ENCODE measurements at regions of chrX and their contacts with region 1.

Region 1: GRCh38 chrX:20442597-20442996 is 175.9 kb upstream of the RPS6KA3 start:
- DNase-seq: peak; percentile 82
- H3K4me3 Mint-ChIP-seq: no peak overlapping the region
- H3K27ac Mint-ChIP-seq: no peak overlapping the region
- H3K4me1 Mint-ChIP-seq: no peaks in the 10 kb centered on the region
- H3K27me3 Mint-ChIP-seq: peaks cover 21% of the 10 kb centered on the region
- CTCF ChIP-seq: peak; percentile 68

Region 2: GRCh38 chrX:20141281-20142220 is 301.0 kb before region 1 on chrX and contains the start of gene EIF1AX:
- CTCF ChIA-PET with region 1: no interaction called
- POLR2A ChIA-PET with region 1: no interaction called
- intact Hi-C with region 1: loop called (anchors 2 kb)
- DNase-seq: peak; percentile 100
- H3K4me3 Mint-ChIP-seq: peak within 1 kb of the TSS; percentile 87
- H3K27ac Mint-ChIP-seq: peak within 1 kb of the TSS; percentile 87
- H3K4me1 Mint-ChIP-seq: peaks cover 11% of the 10 kb centered on the region
- H3K27me3 Mint-ChIP-seq: no peaks in the 10 kb centered on the region
- CTCF ChIP-seq: no peak
- total RNA-seq, gene EIF1AX: 183 and 209 TPM in 2 replicates

Region 3: GRCh38 chrX:20252381-20253231 is 190.0 kb before region 1 on chrX:
- CTCF ChIA-PET with region 1: interaction called, 9 read pairs
- POLR2A ChIA-PET with region 1: no interaction called
- intact Hi-C with region 1: loop called (anchors 1 kb)
- DNase-seq: peak; percentile 73
- H3K4me3 Mint-ChIP-seq: no peak overlapping the region
- H3K27ac Mint-ChIP-seq: no peak overlapping the region
- H3K4me1 Mint-ChIP-seq: no peaks in the 10 kb centered on the region
- H3K27me3 Mint-ChIP-seq: peaks cover 42% of the 10 kb centered on the region
- CTCF ChIP-seq: peak; percentile 73